Transverse colon (tissue), 4 donors: ENCODE measurements at regions of chr1 and their contacts with region 1.

Region 1: DNA sequence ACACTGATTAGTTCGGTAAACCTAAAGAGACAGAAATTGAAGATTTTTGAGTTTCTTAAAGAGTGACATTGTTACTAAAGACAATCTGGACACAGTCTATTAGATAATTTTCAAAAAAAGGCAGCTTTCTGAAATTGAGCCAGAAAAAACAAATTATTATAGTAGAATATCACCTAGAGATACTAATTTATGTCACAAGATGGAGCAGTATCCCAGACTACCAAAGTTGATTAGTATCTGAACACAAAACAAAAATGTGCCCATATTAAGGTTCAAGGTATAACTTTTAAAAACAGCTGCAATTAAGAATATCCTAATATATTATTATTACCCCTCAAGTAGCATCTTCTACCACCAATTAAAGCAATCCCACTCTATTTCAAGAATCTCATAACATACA is 40.5 kb upstream of the SYT2 start:
- DNase-seq: no peak
- H3K4me3 ChIP-seq: no peak overlapping the region
- H3K27ac ChIP-seq: no peak overlapping the region
- H3K4me1 ChIP-seq: no peaks in the 10 kb centered on the region
- H3K27me3 ChIP-seq: no peaks in the 10 kb centered on the region
- CTCF ChIP-seq: peak in 2 of 5 experiments; percentile 5 to 13
- EP300 ChIP-seq: no peak
- POLR2A ChIP-seq: no peak

Region 2: DNA sequence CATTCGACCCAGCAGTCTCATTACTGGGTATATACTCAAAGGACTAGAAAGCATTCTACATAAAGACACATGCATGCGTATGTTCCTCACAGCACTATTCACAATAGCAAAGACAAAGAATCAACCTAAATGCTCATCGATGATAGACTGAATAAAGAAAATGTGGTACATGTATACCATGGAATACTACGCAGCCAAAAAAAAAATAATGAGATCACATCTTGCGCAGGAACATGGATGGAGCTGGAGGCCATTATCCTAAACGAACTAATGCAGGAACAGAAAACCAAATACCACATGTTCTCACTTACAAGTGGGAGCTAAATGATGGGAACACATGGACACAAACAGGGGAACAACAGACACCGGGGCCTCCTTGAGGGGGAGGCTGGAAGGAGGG is 696.7 kb before region 1 on chr1:
- in situ Hi-C with region 1: no loop called
- intact Hi-C with region 1: loop called (anchors 5 kb)
- DNase-seq: no peak
- H3K4me3 ChIP-seq: no peak overlapping the region
- H3K27ac ChIP-seq: no peak overlapping the region
- H3K4me1 ChIP-seq: peaks cover 0 to 33% (median 22%) of the 10 kb centered on the region in 4 donors
- H3K27me3 ChIP-seq: no peaks in the 10 kb centered on the region
- CTCF ChIP-seq: no peak
- EP300 ChIP-seq: no peak
- POLR2A ChIP-seq: no peak

Region 3: GRCh38 chr1:202348509-202349205 is 402.1 kb before region 1 on chr1 and contains the start of gene PPP1R12B:
- in situ Hi-C with region 1: no loop called
- intact Hi-C with region 1: no loop called
- DNase-seq: peak; percentile 97
- H3K4me3 ChIP-seq: peak within 1 kb of the TSS; percentile 74 to 100 (median 90)
- H3K27ac ChIP-seq: peak within 1 kb of the TSS; percentile 90 to 95 (median 92)
- H3K4me1 ChIP-seq: peaks cover 9 to 17% (median 10%) of the 10 kb centered on the region in 4 donors
- H3K27me3 ChIP-seq: no peaks in the 10 kb centered on the region
- CTCF ChIP-seq: no peak
- EP300 ChIP-seq: no peak
- POLR2A ChIP-seq: peak; percentile 76
- total RNA-seq, gene PPP1R12B: 92.7 to 254 (median 137) TPM

Region 4: GRCh38 chr1:203861379-203862184 is 1110.8 kb after region 1 on chr1 and contains the start of gene SNRPE:
- in situ Hi-C with region 1: no loop called
- intact Hi-C with region 1: no loop called
- DNase-seq: peak; percentile 97
- H3K4me3 ChIP-seq: peak within 1 kb of the TSS; percentile 71 to 97 (median 80)
- H3K27ac ChIP-seq: peak within 1 kb of the TSS; percentile 72 to 89 (median 80)
- H3K4me1 ChIP-seq: peaks cover 13 to 27% (median 17%) of the 10 kb centered on the region in 4 donors
- H3K27me3 ChIP-seq: no peaks in the 10 kb centered on the region
- CTCF ChIP-seq: peak; percentile 85 to 98 (median 93)
- EP300 ChIP-seq: no peak
- POLR2A ChIP-seq: peak; percentile 52
- total RNA-seq, gene SNRPE: 3.0 to 30.2 (median 24.0) TPM in 3 of 4 donors, not detected in the other